ENCODE measurements at regions of chr6 and their contacts with region 1.

Region 1: DNA sequence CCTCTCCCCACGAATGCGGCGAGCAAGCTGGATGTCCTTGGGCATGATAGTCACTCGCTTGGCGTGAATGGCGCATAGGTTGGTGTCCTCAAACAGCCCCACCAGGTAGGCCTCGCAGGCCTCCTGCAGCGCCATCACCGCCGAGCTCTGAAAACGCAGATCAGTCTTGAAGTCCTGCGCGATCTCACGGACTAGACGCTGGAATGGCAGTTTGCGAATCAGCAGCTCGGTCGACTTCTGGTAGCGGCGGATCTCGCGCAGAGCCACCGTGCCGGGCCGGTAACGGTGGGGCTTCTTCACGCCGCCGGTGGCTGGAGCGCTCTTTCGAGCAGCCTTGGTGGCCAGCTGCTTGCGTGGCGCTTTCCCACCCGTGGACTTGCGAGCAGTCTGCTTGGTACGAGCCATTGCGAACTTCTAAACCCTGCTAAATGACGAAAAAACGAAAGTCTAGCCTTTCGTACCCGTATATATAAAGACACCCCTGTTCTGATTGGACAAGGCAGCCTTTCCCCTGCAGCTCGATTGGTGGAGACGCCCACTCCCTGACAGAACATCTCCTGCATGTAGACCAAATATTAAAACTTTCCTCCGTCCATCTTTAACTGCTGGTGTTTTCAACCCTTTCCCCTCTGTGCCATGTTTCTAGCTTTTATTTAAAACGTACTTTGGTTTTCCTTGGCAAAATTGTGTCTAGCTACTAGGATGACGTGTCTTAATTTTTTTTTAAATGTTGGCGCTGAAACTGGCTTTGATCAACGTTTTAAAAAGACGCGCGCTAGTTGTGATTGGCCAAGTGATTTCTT is 109.8 kb downstream of the HFE start:
- DNase-seq: peak; percentile 93
- ATAC-seq: peak; percentile 48
- H3K4me3 ChIP-seq: peak overlapping the region; percentile 93
- H3K27ac ChIP-seq: peak overlapping the region; percentile 70
- H3K4me1 ChIP-seq: peaks cover 17% of the 10 kb centered on the region; the same call in 1 of the 2 replicates
- H3K27me3 ChIP-seq: no peaks in the 10 kb centered on the region
- CTCF ChIP-seq: no peak; the same call in 1 of the 2 replicates

Region 2: GRCh38 chr6:26054857-26055669 is 142.0 kb before region 1 on chr6:
- CTCF ChIA-PET with region 1: no interaction called
- POLR2A ChIA-PET with region 1: interaction called, 7 read pairs
- intact Hi-C with region 1: loop called (anchors 5 kb)
- DNase-seq: peak; percentile 93
- ATAC-seq: peak; percentile 53
- H3K4me3 ChIP-seq: peak overlapping the region; percentile 78
- H3K27ac ChIP-seq: peak overlapping the region; percentile 81
- H3K4me1 ChIP-seq: peaks cover 10% of the 10 kb centered on the region
- H3K27me3 ChIP-seq: no peaks in the 10 kb centered on the region
- CTCF ChIP-seq: no peak

Region 3: GRCh38 chr6:26156076-26156849 is 40.8 kb before region 1 on chr6:
- CTCF ChIA-PET with region 1: interaction called, 3 read pairs
- POLR2A ChIA-PET with region 1: interaction called, 140 read pairs
- intact Hi-C with region 1: loop called (anchors 1 kb)
- DNase-seq: peak; percentile 95
- ATAC-seq: peak; percentile 47
- H3K4me3 ChIP-seq: peak overlapping the region; percentile 90
- H3K27ac ChIP-seq: peak overlapping the region; percentile 79
- H3K4me1 ChIP-seq: peaks cover 25% of the 10 kb centered on the region
- H3K27me3 ChIP-seq: no peaks in the 10 kb centered on the region
- CTCF ChIP-seq: no peak

Region 4: GRCh38 chr6:26223650-26224546 is 26.9 kb after region 1 on chr6:
- CTCF ChIA-PET with region 1: no interaction called
- POLR2A ChIA-PET with region 1: interaction called, 10 read pairs
- intact Hi-C with region 1: no loop called
- DNase-seq: peak; percentile 93
- ATAC-seq: peak; percentile 85
- H3K4me3 ChIP-seq: peak overlapping the region; percentile 83
- H3K27ac ChIP-seq: peak overlapping the region; percentile 91
- H3K4me1 ChIP-seq: peaks cover 23% of the 10 kb centered on the region
- H3K27me3 ChIP-seq: no peaks in the 10 kb centered on the region
- CTCF ChIP-seq: no peak

Region 5: GRCh38 chr6:26270903-26271667 is 74.0 kb after region 1 on chr6:
- CTCF ChIA-PET with region 1: no interaction called
- POLR2A ChIA-PET with region 1: no interaction called
- intact Hi-C with region 1: no loop called
- DNase-seq: no peak
- ATAC-seq: no peak
- H3K4me3 ChIP-seq: no peak overlapping the region
- H3K27ac ChIP-seq: no peak overlapping the region
- H3K4me1 ChIP-seq: no peaks in the 10 kb centered on the region
- H3K27me3 ChIP-seq: no peaks in the 10 kb centered on the region
- CTCF ChIP-seq: no peak

Region 6: GRCh38 chr6:27132532-27133280 is 935.7 kb after region 1 on chr6:
- CTCF ChIA-PET with region 1: no interaction called
- POLR2A ChIA-PET with region 1: no interaction called
- intact Hi-C with region 1: loop called (anchors 2 kb)
- DNase-seq: peak; percentile 99
- ATAC-seq: peak; percentile 72
- H3K4me3 ChIP-seq: peak overlapping the region; percentile 82
- H3K27ac ChIP-seq: peak overlapping the region; percentile 95
- H3K4me1 ChIP-seq: peaks cover 32% of the 10 kb centered on the region
- H3K27me3 ChIP-seq: no peaks in the 10 kb centered on the region
- CTCF ChIP-seq: no peak

Measured in PC-3 (cell line).